Activated CD8-positive, alpha-beta T cell treated with anti-CD3 and anti-CD28 coated beads for 36 hours (primary cell): ENCODE measurements at regions of chr13 and their contacts with region 1.

Region 1: GRCh38 chr13:27985600-27985999 is 2.9 kb downstream of the URAD start:
- DNase-seq: no peak
- ATAC-seq: no peak
- H3K4me3 Mint-ChIP-seq: no peak overlapping the region
- H3K27ac Mint-ChIP-seq: no peak overlapping the region
- H3K4me1 Mint-ChIP-seq: no peaks in the 10 kb centered on the region
- H3K27me3 Mint-ChIP-seq: peaks cover 31% of the 10 kb centered on the region
- CTCF ChIP-seq: no peak

Region 2: DNA sequence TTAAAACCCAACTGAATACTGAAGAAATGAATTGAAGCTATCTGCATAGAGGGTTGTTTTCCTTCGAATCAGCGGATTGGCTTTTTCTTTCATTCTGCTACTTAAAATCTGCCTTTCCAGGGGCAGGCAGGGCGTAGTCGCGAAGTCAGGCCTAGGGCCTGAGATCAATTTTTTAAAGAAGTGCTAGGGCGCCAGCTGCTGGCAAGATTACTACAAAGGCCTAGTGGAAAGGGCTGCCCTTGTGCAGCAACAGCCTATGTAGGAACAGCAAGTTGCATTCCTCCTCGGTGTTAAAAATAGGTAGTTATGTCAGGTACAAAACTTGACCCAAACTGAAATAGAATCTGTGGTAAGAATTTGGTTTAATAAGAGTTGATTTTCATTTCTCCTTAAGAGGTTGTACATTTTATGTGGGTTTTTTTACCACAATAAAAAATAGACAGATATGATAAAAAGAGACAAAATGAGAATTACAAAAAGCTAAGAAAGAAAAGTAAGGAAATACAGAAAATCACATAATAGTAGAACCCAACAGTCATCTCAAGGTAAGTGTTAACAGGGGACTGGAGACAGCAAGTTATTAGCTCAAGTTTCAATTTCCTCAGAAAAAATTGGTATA is 12.4 kb after region 1 on chr13:
- CTCF ChIA-PET with region 1: interaction called, 15 read pairs
- POLR2A ChIA-PET with region 1: no interaction called
- intact Hi-C with region 1: no loop called
- DNase-seq: peak; percentile 60
- ATAC-seq: peak; percentile 67
- H3K4me3 Mint-ChIP-seq: no peak overlapping the region
- H3K27ac Mint-ChIP-seq: no peak overlapping the region
- H3K4me1 Mint-ChIP-seq: no peaks in the 10 kb centered on the region
- H3K27me3 Mint-ChIP-seq: no peaks in the 10 kb centered on the region
- CTCF ChIP-seq: peak; percentile 46